ENCODE measurements at regions of chr5 and their contacts with region 1.

Region 1: GRCh38 chr5:59380350-59380951 is 513.1 kb downstream of the PDE4D start:
- DNase-seq: peak; percentile 28
- H3K4me3 ChIP-seq: no peak overlapping the region
- H3K27ac ChIP-seq: no peak overlapping the region
- H3K4me1 ChIP-seq: no peaks in the 10 kb centered on the region; a peak in 1 of 4 replicates
- H3K27me3 ChIP-seq: no peaks in the 10 kb centered on the region
- CTCF ChIP-seq: peak; percentile 74
- EP300 ChIP-seq: no peak
- RAD21 ChIP-seq: peak; percentile 79

Region 2: DNA sequence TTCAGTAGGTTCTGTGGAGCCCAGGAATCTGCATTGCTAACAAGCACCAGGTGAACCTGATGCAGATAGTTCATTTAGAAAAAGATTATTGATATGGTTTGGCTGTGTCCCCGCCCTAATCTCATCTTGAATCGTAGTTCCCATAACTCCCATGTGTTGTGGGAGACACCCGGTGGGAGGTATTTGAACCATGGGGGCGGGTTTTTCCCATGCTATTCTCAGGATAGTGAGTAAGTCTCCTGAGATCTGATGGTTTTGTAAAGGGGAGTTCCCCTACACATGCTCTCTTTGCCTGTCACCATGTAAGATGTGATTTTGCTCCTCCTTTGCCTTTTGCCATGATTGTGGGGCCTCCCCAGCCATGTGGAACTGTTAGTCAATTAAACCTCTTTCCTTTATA is 585.6 kb before region 1 on chr5:
- CTCF ChIA-PET with region 1: no interaction called
- POLR2A ChIA-PET with region 1: no interaction called
- DNase-seq: no peak
- H3K4me3 ChIP-seq: no peak overlapping the region
- H3K27ac ChIP-seq: no peak overlapping the region
- H3K4me1 ChIP-seq: peaks cover 0 to 2% of the 10 kb centered on the region in 2 experiments; a peak in 1 of 4 replicates
- H3K27me3 ChIP-seq: no peaks in the 10 kb centered on the region
- CTCF ChIP-seq: no peak
- EP300 ChIP-seq: no peak
- RAD21 ChIP-seq: no peak

Region 3: DNA sequence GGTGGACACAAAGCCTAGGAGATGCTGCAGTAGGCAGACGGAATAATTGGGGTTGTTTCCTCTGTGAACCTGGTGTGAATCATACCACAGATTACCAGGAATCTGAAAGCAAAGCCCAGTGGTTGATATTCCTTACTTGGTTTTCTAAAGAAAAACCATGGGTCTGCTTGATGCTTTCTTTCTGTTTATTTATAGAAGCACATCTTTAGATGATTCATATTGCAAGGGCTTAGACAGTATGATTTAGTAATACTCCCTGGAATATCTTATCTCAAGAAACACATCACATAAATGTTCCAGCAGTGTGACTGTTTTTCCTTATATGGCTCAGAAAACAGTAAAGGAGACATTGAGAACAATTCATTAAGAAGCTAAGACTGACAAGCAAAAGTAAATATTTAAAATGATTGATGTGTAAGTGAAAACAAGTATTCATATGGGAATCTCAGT is 174.3 kb before region 1 on chr5:
- CTCF ChIA-PET with region 1: interaction called, 23 read pairs
- POLR2A ChIA-PET with region 1: no interaction called
- DNase-seq: no peak
- H3K4me3 ChIP-seq: no peak overlapping the region
- H3K27ac ChIP-seq: peak overlapping the region; percentile 26 to 50; a peak in 3 of 4 replicates
- H3K4me1 ChIP-seq: peaks cover 0 to 19% of the 10 kb centered on the region in 2 experiments; a peak in 2 of 4 replicates
- H3K27me3 ChIP-seq: no peaks in the 10 kb centered on the region
- CTCF ChIP-seq: no peak
- EP300 ChIP-seq: peak; percentile 26 to 74; a peak in 2 of 4 replicates
- RAD21 ChIP-seq: no peak

Region 4: DNA sequence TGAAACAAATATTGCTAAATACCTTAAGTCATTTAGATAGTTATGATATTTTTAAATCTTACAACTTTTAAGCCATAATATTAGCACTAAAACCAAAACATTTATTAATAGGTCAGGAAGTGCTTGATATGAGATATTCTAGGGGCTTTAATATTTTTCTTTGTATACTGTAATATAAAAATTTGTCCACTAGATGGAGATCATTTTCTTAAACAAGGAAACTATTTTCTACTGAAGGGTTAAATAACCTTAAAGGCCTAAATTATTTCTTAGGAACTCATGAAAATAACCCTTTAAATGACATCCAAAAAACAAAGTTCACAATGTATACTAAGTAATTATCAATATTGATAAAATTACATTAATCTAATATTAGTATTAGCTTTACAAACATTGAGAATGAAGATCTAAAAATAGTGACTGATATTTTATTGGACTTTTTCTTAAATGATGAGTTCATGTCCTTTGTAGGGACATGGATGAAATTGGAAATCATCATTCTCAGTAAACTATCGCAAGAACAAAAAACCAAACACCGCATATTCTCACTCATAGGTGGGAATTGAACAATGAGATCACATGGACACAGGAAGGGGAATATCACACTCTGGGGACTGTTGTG is 161.9 kb before region 1 on chr5:
- CTCF ChIA-PET with region 1: interaction called, 14 read pairs
- POLR2A ChIA-PET with region 1: no interaction called
- DNase-seq: peak; percentile 13
- H3K4me3 ChIP-seq: no peak overlapping the region
- H3K27ac ChIP-seq: no peak overlapping the region
- H3K4me1 ChIP-seq: peaks cover 0 to 5% of the 10 kb centered on the region in 2 experiments; a peak in 2 of 4 replicates
- H3K27me3 ChIP-seq: no peaks in the 10 kb centered on the region
- CTCF ChIP-seq: peak; percentile 66
- EP300 ChIP-seq: no peak
- RAD21 ChIP-seq: peak; percentile 46

Region 5: GRCh38 chr5:59256331-59256730 is 124.1 kb before region 1 on chr5:
- CTCF ChIA-PET with region 1: no interaction called
- POLR2A ChIA-PET with region 1: no interaction called
- DNase-seq: no peak
- H3K4me3 ChIP-seq: no peak overlapping the region
- H3K27ac ChIP-seq: no peak overlapping the region
- H3K4me1 ChIP-seq: no peaks in the 10 kb centered on the region; a peak in 2 of 4 replicates
- H3K27me3 ChIP-seq: no peaks in the 10 kb centered on the region
- CTCF ChIP-seq: no peak
- EP300 ChIP-seq: no peak
- RAD21 ChIP-seq: no peak

Region 6: DNA sequence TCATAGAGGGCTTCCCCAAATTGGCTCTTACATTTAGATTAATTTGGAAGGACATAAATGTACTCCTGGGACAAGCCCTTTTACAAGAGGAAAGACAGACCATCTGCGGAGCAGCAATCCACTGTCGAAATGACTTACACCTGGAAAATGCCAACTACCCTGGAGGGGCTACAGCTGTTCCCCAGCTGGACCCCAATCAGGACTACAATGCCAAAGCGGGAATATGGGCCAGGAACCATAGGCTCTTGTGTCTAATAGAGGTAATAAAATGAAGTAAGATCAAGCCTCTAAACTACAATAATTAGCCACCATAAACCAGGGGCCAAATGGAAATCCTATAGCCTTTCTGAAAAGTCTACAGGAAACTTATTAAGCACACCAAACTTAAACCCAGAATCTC is 68.2 kb before region 1 on chr5:
- CTCF ChIA-PET with region 1: no interaction called
- POLR2A ChIA-PET with region 1: no interaction called
- DNase-seq: no peak
- H3K4me3 ChIP-seq: no peak overlapping the region
- H3K27ac ChIP-seq: no peak overlapping the region
- H3K4me1 ChIP-seq: peaks cover 0 to 7% of the 10 kb centered on the region in 2 experiments; a peak in 2 of 4 replicates
- H3K27me3 ChIP-seq: no peaks in the 10 kb centered on the region
- CTCF ChIP-seq: no peak
- EP300 ChIP-seq: no peak
- RAD21 ChIP-seq: no peak

Region 7: DNA sequence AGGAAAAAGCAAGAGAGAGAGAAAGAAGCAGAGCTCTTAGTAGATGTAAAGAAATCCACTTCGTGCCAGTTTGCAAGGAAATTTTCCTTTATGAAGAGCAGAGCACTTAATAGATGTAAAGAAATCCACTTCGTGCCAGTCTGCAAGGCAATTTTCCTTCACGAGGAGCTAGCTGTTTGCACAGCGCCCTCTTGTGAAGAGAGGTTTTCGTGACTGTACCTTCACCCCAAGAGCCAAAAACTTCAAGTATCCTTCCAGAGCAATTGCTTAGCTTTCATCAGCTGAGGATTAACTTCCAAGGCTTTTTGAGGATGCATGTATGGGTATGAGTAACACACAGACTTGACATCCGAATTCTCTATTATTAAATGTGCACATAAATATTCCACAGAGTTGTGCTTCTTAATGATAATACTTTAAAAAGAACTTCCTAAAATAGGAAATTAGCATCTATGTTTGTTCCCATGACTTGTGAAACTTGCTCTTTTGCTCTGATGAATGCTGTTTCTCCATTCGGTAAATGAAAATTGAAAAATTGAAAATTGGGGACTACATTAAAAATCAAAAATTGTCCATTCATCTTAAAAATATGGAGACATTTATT is 12.6 kb before region 1 on chr5:
- CTCF ChIA-PET with region 1: interaction called, 38 read pairs
- POLR2A ChIA-PET with region 1: no interaction called
- DNase-seq: peak; percentile 39
- H3K4me3 ChIP-seq: no peak overlapping the region; a peak in 1 of 4 replicates
- H3K27ac ChIP-seq: no peak overlapping the region
- H3K4me1 ChIP-seq: no peaks in the 10 kb centered on the region; a peak in 2 of 4 replicates
- H3K27me3 ChIP-seq: no peaks in the 10 kb centered on the region
- CTCF ChIP-seq: peak; percentile 83
- EP300 ChIP-seq: no peak
- RAD21 ChIP-seq: peak; percentile 89

Region 8: DNA sequence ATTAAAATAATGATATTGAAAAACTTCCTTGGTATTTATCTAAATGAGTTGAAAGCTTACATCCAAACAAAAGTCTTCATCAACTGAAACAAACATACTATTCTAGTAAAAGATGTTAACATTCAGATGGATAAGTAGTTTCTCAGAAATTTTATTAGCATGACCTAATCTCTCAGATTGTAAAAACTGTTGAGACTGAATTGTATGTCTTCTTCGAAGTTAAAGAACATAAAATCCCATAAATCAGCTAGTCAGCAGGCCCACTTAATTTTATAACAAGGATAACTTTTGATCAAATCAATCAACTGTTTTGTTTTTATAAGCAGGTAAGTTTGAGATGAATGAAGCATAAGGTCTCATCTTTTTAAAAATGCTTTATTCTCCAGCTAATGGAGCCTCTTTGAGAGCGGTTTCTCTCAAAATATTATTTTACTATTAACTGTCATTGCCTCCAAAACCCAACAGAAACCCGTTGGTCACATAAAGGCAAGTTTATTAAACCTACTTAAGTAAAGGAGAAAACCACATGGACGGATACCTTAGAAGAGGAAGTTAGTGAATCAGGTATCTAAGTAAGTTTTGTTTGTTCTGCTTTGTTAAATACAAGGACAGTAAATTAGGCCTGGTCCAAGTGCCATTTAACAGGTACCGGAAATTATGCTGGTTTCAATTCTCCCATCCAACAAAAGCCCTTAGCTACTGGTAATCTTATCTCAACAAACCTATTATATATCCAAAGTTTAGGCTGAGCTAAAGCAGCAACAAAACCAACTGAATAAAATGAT is 56.1 kb after region 1 on chr5:
- CTCF ChIA-PET with region 1: no interaction called
- POLR2A ChIA-PET with region 1: no interaction called
- DNase-seq: no peak
- H3K4me3 ChIP-seq: no peak overlapping the region
- H3K27ac ChIP-seq: no peak overlapping the region
- H3K4me1 ChIP-seq: no peaks in the 10 kb centered on the region
- H3K27me3 ChIP-seq: no peaks in the 10 kb centered on the region
- CTCF ChIP-seq: no peak
- EP300 ChIP-seq: no peak
- RAD21 ChIP-seq: no peak

Region 9: GRCh38 chr5:59660737-59661136 is 280.3 kb after region 1 on chr5:
- CTCF ChIA-PET with region 1: interaction called, 15 read pairs
- POLR2A ChIA-PET with region 1: no interaction called
- DNase-seq: peak; percentile 21
- H3K4me3 ChIP-seq: no peak overlapping the region
- H3K27ac ChIP-seq: peak overlapping the region in 1 of 2 experiments; percentile 64; a peak in 2 of 4 replicates
- H3K4me1 ChIP-seq: peaks cover 4 to 22% of the 10 kb centered on the region in 2 experiments; a peak in 3 of 4 replicates
- H3K27me3 ChIP-seq: no peaks in the 10 kb centered on the region
- CTCF ChIP-seq: peak; percentile 67
- EP300 ChIP-seq: no peak
- RAD21 ChIP-seq: peak; percentile 77

Region 10: DNA sequence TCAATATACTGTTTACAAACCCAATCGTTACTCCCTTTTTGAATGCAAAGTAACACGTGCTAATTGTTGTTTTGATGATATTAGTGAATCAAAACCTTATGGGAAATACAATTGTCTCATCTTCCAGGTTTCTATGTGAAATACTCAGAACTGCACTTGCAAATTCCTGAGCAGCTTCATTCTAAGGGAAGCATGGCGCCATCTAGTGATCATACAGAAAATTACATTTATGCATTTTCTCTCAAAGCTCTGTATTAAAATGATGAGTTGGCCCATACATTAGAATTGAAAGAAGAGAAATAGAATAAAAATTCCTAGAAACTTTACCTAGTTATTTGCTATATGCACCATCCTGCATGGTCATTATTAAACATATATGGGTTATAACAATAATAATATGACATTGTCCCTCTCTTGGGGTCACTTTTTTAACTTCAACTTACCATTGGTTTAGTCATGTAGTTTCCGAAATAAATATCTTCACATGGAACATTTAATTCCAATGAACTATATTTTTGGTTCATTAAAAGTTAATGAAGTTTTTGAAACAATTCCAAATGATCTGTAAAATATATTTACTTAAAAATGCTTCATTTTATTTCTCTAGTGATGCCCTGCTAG is 293.1 kb after region 1 on chr5:
- CTCF ChIA-PET with region 1: interaction called, 25 read pairs
- POLR2A ChIA-PET with region 1: no interaction called
- DNase-seq: peak; percentile 24
- H3K4me3 ChIP-seq: no peak overlapping the region; a peak in 1 of 4 replicates
- H3K27ac ChIP-seq: no peak overlapping the region
- H3K4me1 ChIP-seq: peaks cover 2 to 4% of the 10 kb centered on the region in 2 experiments; a peak in 3 of 4 replicates
- H3K27me3 ChIP-seq: no peaks in the 10 kb centered on the region
- CTCF ChIP-seq: peak; percentile 89
- EP300 ChIP-seq: no peak
- RAD21 ChIP-seq: peak; percentile 90

Region 11: DNA sequence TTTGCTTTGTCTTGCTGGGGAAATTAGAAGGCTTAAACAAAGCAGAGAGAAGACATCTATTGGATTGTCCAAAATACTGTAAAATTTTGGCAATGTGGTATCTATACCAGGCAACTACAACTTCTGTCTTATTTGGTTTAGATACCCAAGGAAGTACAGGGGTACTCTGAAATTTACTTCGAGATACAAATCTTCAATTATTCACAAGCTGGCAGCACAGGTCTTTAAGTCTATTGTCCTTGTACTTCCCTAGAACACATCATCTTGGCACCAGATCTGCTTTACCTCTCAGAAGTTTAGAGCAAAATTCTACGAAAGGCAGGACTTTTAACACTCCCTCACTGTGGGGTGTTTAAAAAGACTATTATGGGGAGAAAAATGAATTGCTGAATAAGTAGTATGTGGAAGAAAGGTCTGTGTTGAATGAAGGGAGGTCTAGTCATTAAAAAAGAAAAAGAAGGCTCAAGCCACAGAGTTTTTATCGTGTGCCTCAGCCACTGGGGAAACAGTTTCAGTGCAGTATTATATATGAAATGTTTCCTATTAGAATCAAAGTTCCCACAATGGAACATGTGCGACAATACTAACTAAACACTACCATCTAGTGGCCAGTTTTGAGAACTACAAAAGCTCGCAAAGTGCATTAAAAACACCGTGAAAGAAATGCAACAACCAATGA is 419.4 kb after region 1 on chr5:
- CTCF ChIA-PET with region 1: interaction called, 21 read pairs
- POLR2A ChIA-PET with region 1: no interaction called
- DNase-seq: peak; percentile 37
- H3K4me3 ChIP-seq: no peak overlapping the region; a peak in 1 of 4 replicates
- H3K27ac ChIP-seq: peak overlapping the region; percentile 46 to 74; a peak in 3 of 4 replicates
- H3K4me1 ChIP-seq: peaks cover 10 to 15% of the 10 kb centered on the region in 2 experiments
- H3K27me3 ChIP-seq: no peaks in the 10 kb centered on the region
- CTCF ChIP-seq: peak; percentile 81
- EP300 ChIP-seq: no peak
- RAD21 ChIP-seq: peak; percentile 97

Measured in SK-N-SH (cell line).